ENCODE measurements at regions of chr19 and their contacts with region 1.

Region 1: GRCh38 chr19:46022431-46023310 is at the start of gene PGLYRP1:
- DNase-seq: no peak
- ATAC-seq: no peak
- H3K4me3 ChIP-seq: no peak within 1 kb of the TSS
- H3K27ac ChIP-seq: no peak within 1 kb of the TSS
- H3K4me1 ChIP-seq: no peaks in the 10 kb centered on the region
- H3K27me3 ChIP-seq: no peaks in the 10 kb centered on the region
- CTCF ChIP-seq: no peak
- total RNA-seq, gene PGLYRP1: not detected

Region 2: DNA sequence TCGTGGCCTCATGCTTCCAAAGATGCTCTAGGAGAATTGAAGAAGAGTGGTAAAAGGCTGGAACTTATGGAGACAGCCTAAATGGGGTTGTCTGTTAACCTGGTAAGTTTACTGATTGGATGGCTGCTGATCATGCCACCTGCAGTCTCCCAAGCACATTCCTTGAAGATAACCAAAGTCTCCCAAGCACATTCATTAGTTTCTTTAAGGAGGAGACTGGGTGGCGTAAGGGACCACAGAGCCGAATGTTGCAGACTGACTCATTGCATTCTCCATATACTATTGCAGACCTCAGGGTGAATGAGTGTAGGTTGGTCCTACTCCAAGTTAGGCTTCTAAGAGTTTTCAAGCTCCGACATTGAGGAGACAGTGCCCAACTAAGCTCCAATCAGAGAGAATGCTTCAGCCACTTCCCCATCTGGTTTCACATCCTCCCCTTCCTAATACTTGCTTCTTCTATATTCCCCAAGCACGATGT is 102.0 kb after region 1 on chr19 and contains the start of gene IGFL3:
- CTCF ChIA-PET with region 1: no interaction called
- POLR2A ChIA-PET with region 1: no interaction called
- in situ Hi-C with region 1: no loop called
- intact Hi-C with region 1: no loop called
- DNase-seq: no peak
- ATAC-seq: no peak
- H3K4me3 ChIP-seq: no peak within 1 kb of the TSS
- H3K27ac ChIP-seq: no peak within 1 kb of the TSS
- H3K4me1 ChIP-seq: no peaks in the 10 kb centered on the region
- H3K27me3 ChIP-seq: peaks cover 8% of the 10 kb centered on the region; the same call in 1 of the 2 replicates
- CTCF ChIP-seq: no peak
- total RNA-seq, gene IGFL3: not detected

Region 3: GRCh38 chr19:46239193-46240024 is 216.7 kb after region 1 on chr19:
- CTCF ChIA-PET with region 1: interaction called, 15 read pairs
- POLR2A ChIA-PET with region 1: no interaction called
- in situ Hi-C with region 1: no loop called
- intact Hi-C with region 1: no loop called
- DNase-seq: no peak
- ATAC-seq: no peak
- H3K4me3 ChIP-seq: no peak overlapping the region
- H3K27ac ChIP-seq: no peak overlapping the region
- H3K4me1 ChIP-seq: no peaks in the 10 kb centered on the region
- H3K27me3 ChIP-seq: peaks cover 11% of the 10 kb centered on the region
- CTCF ChIP-seq: no peak

Region 4: DNA sequence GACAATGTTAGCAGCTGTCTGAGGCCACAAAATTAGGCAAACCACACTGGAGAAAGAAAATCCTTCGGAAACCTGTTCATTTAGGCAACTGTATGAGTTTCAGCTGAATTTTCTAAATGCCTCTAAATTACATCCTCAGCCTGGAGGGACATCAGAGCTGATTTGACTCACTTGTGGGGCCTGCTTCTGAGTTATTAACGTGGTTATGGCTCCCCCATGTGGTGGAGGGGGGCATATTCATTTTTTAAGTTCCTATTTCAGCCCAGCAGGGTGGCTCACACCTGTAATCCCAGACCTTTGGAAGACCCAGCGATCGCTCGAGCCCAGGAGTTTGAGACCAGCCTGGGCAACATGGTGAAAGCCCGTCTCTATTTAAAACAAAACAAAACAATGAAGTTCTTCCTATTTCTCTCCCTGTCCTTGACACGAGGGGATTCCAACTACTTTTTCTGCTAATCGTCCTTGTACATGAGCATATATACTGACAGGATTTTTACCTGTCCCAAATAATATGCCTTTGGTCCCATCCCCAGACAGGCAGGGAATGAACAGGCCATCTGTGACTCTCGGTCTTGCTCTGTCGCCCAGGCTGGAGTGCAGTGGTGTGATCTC is 242.7 kb after region 1 on chr19:
- CTCF ChIA-PET with region 1: no interaction called
- POLR2A ChIA-PET with region 1: no interaction called
- in situ Hi-C with region 1: no loop called
- intact Hi-C with region 1: loop called (anchors 5 kb)
- DNase-seq: no peak
- ATAC-seq: peak; percentile 91
- H3K4me3 ChIP-seq: no peak overlapping the region
- H3K27ac ChIP-seq: no peak overlapping the region
- H3K4me1 ChIP-seq: no peaks in the 10 kb centered on the region
- H3K27me3 ChIP-seq: no peaks in the 10 kb centered on the region
- CTCF ChIP-seq: peak; percentile 82

Measured in Panc1 (cell line).